ENCODE measurements at regions of chr5 and their contacts with region 1.

Region 1: DNA sequence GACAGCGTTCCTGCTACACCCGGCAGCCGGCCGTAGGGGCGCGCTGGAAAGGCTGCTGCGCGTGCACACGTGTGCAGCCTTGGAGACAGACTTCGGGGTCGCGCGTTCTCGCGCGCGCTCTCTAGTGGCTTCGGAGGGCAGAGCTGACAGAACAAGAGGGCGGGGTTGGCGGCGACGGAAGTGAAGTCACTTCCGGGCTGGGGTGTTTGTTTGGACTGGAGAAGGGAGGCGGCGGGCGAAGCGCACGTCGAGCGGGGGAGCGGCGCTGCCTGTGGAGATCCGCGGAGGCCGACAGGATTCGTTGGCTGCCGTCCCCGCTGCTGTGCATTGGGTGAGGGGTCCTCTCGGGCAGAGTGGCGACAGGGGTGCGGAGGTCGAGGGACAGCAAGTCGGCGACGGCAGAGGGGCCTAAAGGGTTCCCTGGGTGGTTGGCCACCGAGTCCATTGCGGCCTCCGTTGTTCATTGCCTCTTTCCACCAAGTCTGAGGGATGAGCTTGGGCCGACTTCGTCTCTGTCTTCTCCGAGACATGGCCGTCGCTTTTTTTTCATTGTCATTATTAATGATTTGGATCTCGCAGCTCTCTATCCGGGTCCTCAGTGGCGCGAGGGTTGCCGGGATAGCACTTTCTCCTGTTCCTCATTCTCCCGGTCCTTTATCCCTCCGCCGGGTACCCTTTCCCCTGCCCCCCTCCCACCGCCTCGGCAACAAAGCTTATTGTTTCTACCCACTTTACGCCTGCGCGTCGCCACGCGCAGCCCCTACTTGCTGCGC is at the start of gene PAIP2:
- DNase-seq: peak; percentile 95 to 100 (median 98)

Region 2: GRCh38 chr5:139273572-139274289 is 68.1 kb before region 1 on chr5:
- intact Hi-C with region 1: loop called (anchors 5 kb)
- DNase-seq: peak; percentile 56 to 97 (median 76)

Region 3: GRCh38 chr5:139293504-139294373 is 48.1 kb before region 1 on chr5 and contains the start of gene MATR3:
- intact Hi-C with region 1: loop called (anchors 2 kb)
- DNase-seq: peak; percentile 88 to 98 (median 93)

Region 4: DNA sequence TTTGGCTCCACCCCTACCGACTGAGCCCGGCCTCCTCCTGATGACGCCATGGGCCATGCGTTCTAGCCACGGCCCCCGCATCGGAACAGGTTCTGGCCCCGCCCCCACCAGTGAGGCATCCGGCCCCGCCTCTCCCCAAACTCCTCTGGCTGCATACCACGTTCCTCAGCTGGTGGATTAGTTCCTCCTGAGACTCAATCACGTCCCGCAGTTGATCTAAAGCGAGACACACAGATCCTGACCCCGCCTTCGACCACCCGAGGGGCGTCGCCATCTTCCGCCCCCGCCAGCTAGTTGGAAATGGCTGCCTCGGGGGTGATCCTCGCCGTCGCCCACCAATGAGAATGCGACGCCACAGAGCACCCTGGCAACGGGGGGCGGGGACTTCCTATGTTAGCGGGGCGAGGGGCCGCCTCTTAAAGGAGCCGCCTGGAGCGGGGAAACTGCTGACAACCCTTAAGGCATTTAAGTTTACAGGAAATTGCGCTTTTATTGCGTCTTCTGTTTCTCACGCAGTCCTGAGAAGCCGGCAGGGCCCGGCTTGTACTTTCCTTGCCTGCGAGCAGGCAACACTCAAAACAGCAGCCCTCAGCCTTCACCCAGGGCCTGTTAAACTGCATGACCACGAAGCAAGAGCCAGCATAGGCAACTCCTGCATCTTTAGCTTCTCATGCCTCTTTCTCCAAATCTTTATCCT is 62.1 kb after region 1 on chr5 and contains the start of gene SPATA24:
- intact Hi-C with region 1: loop called (anchors 2 kb)
- DNase-seq: peak; percentile 94 to 100 (median 98)

Measured in posterior cingulate gyrus (tissue), 11 donors.